Activated CD8-positive, alpha-beta T cell treated with anti-CD3 and anti-CD28 coated beads for 36 hours (primary cell): ENCODE measurements at regions of chr11 and their contacts with region 1.

Region 1: DNA sequence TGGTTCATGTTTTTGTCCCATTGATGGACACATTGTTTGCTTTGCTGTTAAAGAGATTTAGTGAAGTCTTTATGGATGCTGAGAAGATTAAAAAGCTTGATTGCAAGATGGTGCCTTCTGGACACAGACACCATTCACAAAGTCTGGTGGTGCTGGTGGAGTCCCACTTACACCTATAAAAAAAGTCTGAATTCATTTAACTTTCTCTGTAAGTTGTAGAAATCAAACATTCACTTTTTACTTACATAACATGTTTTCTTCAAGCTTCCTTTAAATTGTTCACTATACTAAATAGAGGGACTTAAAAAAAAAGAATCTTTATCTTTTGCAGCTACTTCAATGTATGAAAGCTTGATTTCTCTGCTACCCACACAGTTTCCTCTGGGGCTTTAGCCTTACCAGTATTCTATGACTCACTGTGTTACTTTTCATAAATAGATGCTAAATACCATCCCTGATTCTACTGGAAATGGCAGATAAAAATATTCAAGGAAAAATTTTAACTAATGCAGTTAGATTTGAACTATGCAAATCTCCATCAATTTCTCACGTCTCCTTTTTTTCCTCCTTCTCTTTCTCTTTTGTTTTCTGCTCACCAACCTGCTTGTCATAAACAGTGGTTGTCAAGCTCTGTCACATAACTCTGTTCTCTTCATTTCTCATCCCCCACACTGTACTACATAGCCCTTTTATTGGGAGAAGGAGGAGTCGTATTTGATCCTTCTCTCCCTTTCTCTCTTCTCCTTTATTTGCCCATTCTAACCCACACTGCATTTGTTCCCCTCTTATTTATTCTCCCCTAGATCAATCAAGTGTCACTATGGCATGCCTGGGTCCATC is 89.7 kb downstream of the FAM76B start:
- DNase-seq: no peak
- ATAC-seq: peak; percentile 60
- H3K4me3 Mint-ChIP-seq: peak overlapping the region; percentile 57
- H3K27ac Mint-ChIP-seq: peak overlapping the region; percentile 95
- H3K4me1 Mint-ChIP-seq: peaks cover 54% of the 10 kb centered on the region
- H3K27me3 Mint-ChIP-seq: no peaks in the 10 kb centered on the region
- CTCF ChIP-seq: no peak

Region 2: GRCh38 chr11:95363708-95364107 is 336.1 kb before region 1 on chr11:
- CTCF ChIA-PET with region 1: no interaction called
- POLR2A ChIA-PET with region 1: no interaction called
- intact Hi-C with region 1: no loop called
- DNase-seq: no peak
- ATAC-seq: no peak
- H3K4me3 Mint-ChIP-seq: no peak overlapping the region
- H3K27ac Mint-ChIP-seq: no peak overlapping the region
- H3K4me1 Mint-ChIP-seq: peaks cover 4% of the 10 kb centered on the region
- H3K27me3 Mint-ChIP-seq: no peaks in the 10 kb centered on the region
- CTCF ChIP-seq: no peak

Region 3: DNA sequence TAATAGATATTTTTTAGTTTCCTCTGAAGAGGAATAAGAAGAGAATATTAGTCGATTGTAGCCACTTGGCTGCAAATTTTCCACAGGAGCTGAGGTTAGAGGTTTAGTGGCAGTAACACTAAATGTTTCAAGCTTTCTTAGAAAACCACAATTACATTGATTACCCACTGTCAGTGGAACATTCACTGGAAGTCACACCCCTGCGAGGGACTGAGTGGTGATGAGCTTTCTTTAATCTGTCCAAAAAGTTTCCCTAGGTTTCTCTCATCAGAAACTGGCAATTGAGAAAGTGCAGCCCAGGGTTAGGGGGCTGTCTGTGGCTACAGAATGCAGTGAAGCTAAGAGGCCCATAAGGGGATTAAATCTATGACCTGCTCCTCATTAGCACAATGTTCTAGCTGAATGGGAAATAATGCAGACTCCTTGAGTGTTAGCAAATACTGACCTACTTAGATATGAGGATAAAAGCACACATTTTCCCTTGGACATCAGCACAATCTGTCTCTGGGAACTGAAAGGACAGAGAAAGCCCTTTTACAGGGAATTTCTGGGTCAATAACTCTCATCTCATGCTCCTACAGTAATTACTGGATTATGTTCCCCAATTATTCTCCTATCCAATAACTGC is 99.8 kb before region 1 on chr11:
- CTCF ChIA-PET with region 1: interaction called, 5 read pairs
- POLR2A ChIA-PET with region 1: no interaction called
- intact Hi-C with region 1: loop called (anchors 5 kb)
- DNase-seq: peak; percentile 62
- ATAC-seq: peak; percentile 92
- H3K4me3 Mint-ChIP-seq: no peak overlapping the region
- H3K27ac Mint-ChIP-seq: peak overlapping the region; percentile 79
- H3K4me1 Mint-ChIP-seq: peaks cover 19% of the 10 kb centered on the region
- H3K27me3 Mint-ChIP-seq: no peaks in the 10 kb centered on the region
- CTCF ChIP-seq: no peak

Region 4: GRCh38 chr11:95659088-95659487 is 40.8 kb before region 1 on chr11:
- CTCF ChIA-PET with region 1: interaction called, 10 read pairs
- POLR2A ChIA-PET with region 1: no interaction called
- intact Hi-C with region 1: loop called (anchors 5 kb)
- DNase-seq: no peak
- ATAC-seq: no peak
- H3K4me3 Mint-ChIP-seq: no peak overlapping the region
- H3K27ac Mint-ChIP-seq: no peak overlapping the region
- H3K4me1 Mint-ChIP-seq: peaks cover 29% of the 10 kb centered on the region
- H3K27me3 Mint-ChIP-seq: no peaks in the 10 kb centered on the region
- CTCF ChIP-seq: no peak

Region 5: GRCh38 chr11:95688580-95689189 is 11.2 kb before region 1 on chr11:
- CTCF ChIA-PET with region 1: interaction called, 25 read pairs
- POLR2A ChIA-PET with region 1: interaction called, 18 read pairs
- intact Hi-C with region 1: no loop called
- DNase-seq: no peak
- ATAC-seq: peak; percentile 77
- H3K4me3 Mint-ChIP-seq: no peak overlapping the region
- H3K27ac Mint-ChIP-seq: no peak overlapping the region
- H3K4me1 Mint-ChIP-seq: peaks cover 23% of the 10 kb centered on the region
- H3K27me3 Mint-ChIP-seq: no peaks in the 10 kb centered on the region
- CTCF ChIP-seq: no peak

Region 6: GRCh38 chr11:95923728-95924413 is 224.0 kb after region 1 on chr11 and contains the start of gene MTMR2:
- CTCF ChIA-PET with region 1: no interaction called
- POLR2A ChIA-PET with region 1: no interaction called
- intact Hi-C with region 1: no loop called
- DNase-seq: peak; percentile 74
- ATAC-seq: peak; percentile 98
- H3K4me3 Mint-ChIP-seq: peak within 1 kb of the TSS; percentile 95
- H3K27ac Mint-ChIP-seq: peak within 1 kb of the TSS; percentile 100
- H3K4me1 Mint-ChIP-seq: peaks cover 17% of the 10 kb centered on the region
- H3K27me3 Mint-ChIP-seq: no peaks in the 10 kb centered on the region
- CTCF ChIP-seq: no peak
- total RNA-seq, gene MTMR2: 36.5 to 39.7 TPM